ENCODE measurements at regions of chr22 and their contacts with region 1.

Region 1: GRCh38 chr22:18077639-18078328 is at the start of gene PEX26:
- DNase-seq: peak; percentile 89 to 97
- ATAC-seq: peak; percentile 97 to 100 (median 99)
- H3K4me3 ChIP-seq: peak within 1 kb of the TSS; percentile 91
- H3K4me3 Mint-ChIP-seq: peak within 1 kb of the TSS; percentile 97
- H3K27ac ChIP-seq: peak within 1 kb of the TSS; percentile 84
- H3K27ac Mint-ChIP-seq: peak within 1 kb of the TSS; percentile 96
- H3K4me1 ChIP-seq: peaks cover 23% of the 10 kb centered on the region
- H3K4me1 Mint-ChIP-seq: peaks cover 47 to 55% of the 10 kb centered on the region in 2 donors
- H3K27me3 ChIP-seq: no peaks in the 10 kb centered on the region
- H3K27me3 Mint-ChIP-seq: no peaks in the 10 kb centered on the region
- CTCF ChIP-seq: no peak
- total RNA-seq, gene PEX26: 27.6 to 37.4 (median 31.2) TPM

Region 2: GRCh38 chr22:17077255-17077654 is 1000.5 kb before region 1 on chr22:
- intact Hi-C with region 1: loop called (anchors 10 kb)
- DNase-seq: no peak
- ATAC-seq: no peak
- H3K4me3 ChIP-seq: no peak overlapping the region
- H3K4me3 Mint-ChIP-seq: no peak overlapping the region
- H3K27ac ChIP-seq: no peak overlapping the region
- H3K27ac Mint-ChIP-seq: no peak overlapping the region
- H3K4me1 ChIP-seq: peaks cover 9% of the 10 kb centered on the region
- H3K4me1 Mint-ChIP-seq: no peaks in the 10 kb centered on the region
- H3K27me3 ChIP-seq: peaks cover 2% of the 10 kb centered on the region
- H3K27me3 Mint-ChIP-seq: peaks cover 0 to 26% of the 10 kb centered on the region in 2 donors
- CTCF ChIP-seq: no peak

Region 3: GRCh38 chr22:17158568-17159503 is 918.9 kb before region 1 on chr22 and contains the start of gene HDHD5:
- intact Hi-C with region 1: loop called (anchors 10 kb)
- DNase-seq: peak; percentile 84 to 94
- ATAC-seq: peak; percentile 93 to 97 (median 95)
- H3K4me3 ChIP-seq: peak within 1 kb of the TSS; percentile 77
- H3K4me3 Mint-ChIP-seq: peak within 1 kb of the TSS; percentile 93
- H3K27ac ChIP-seq: peak within 1 kb of the TSS; percentile 62
- H3K27ac Mint-ChIP-seq: peak within 1 kb of the TSS; percentile 48 to 74
- H3K4me1 ChIP-seq: peaks cover 24% of the 10 kb centered on the region
- H3K4me1 Mint-ChIP-seq: peaks cover 12 to 16% of the 10 kb centered on the region in 2 donors
- H3K27me3 ChIP-seq: no peaks in the 10 kb centered on the region
- H3K27me3 Mint-ChIP-seq: no peaks in the 10 kb centered on the region
- CTCF ChIP-seq: no peak
- total RNA-seq, gene HDHD5: 12.0 to 16.5 (median 13.5) TPM

Region 4: DNA sequence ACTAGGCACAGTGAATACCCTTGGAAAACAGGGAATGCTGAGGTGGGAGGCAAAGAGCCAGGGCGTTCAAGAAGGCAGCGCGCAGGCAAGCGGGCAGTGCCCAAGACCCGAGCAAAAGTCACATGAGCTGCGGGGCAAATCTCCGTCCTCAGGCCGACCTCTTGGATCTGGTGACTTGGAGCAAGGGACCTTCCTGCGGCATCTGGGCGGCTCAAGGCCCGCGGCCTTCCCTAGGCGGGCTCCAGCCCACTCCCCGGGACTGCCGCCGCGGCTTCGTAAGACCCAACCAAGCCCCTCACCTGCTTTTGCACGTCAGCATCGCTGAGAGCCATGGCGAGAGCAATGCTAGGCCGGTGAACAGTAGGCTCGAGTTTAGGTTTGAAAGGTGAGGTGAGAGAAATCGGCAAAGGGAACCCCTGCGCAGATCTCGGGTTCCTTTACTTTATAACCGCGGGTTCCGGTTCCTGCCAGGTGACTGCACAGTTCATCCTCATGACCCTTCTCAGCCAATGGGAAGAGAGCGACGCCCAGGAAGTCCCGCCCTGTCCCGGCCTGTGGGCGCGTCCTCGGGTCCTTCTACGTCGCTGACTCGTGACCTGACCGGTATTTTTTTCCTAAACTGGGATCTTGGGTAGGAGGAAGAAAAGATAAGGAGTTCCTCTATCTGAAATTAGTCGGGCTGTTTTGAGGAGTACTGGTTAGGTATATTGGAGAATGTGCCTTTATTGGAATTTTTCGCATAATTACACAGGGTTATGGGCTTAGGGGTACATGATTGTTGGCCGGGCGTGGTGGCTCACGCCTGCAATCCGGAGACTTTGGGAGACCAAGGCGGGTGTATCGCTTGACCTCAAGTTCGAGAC is 449.2 kb before region 1 on chr22 and contains the start of gene ATP6V1E1:
- intact Hi-C with region 1: loop called (anchors 2 kb)
- DNase-seq: peak; percentile 97
- ATAC-seq: peak; percentile 99 to 100 (median 100)
- H3K4me3 ChIP-seq: peak within 1 kb of the TSS; percentile 81
- H3K4me3 Mint-ChIP-seq: peak within 1 kb of the TSS; percentile 96
- H3K27ac ChIP-seq: peak within 1 kb of the TSS; percentile 82
- H3K27ac Mint-ChIP-seq: peak within 1 kb of the TSS; percentile 94 to 99
- H3K4me1 ChIP-seq: peaks cover 23% of the 10 kb centered on the region
- H3K4me1 Mint-ChIP-seq: peaks cover 10 to 19% of the 10 kb centered on the region in 2 donors
- H3K27me3 ChIP-seq: no peaks in the 10 kb centered on the region
- H3K27me3 Mint-ChIP-seq: no peaks in the 10 kb centered on the region
- CTCF ChIP-seq: no peak
- total RNA-seq, gene ATP6V1E1: 75.8 to 79.8 (median 76.4) TPM

Region 5: GRCh38 chr22:17742527-17742902 is 335.3 kb before region 1 on chr22:
- intact Hi-C with region 1: loop called (anchors 1 kb)
- DNase-seq: peak; percentile 52 to 85
- ATAC-seq: peak; percentile 79 to 96 (median 88)
- H3K4me3 ChIP-seq: no peak overlapping the region
- H3K4me3 Mint-ChIP-seq: no peak overlapping the region
- H3K27ac ChIP-seq: no peak overlapping the region
- H3K27ac Mint-ChIP-seq: peak overlapping the region; percentile 70 to 76
- H3K4me1 ChIP-seq: no peaks in the 10 kb centered on the region
- H3K4me1 Mint-ChIP-seq: peaks cover 6 to 10% of the 10 kb centered on the region in 2 donors
- H3K27me3 ChIP-seq: no peaks in the 10 kb centered on the region
- H3K27me3 Mint-ChIP-seq: no peaks in the 10 kb centered on the region
- CTCF ChIP-seq: peak; percentile 77

Region 6: DNA sequence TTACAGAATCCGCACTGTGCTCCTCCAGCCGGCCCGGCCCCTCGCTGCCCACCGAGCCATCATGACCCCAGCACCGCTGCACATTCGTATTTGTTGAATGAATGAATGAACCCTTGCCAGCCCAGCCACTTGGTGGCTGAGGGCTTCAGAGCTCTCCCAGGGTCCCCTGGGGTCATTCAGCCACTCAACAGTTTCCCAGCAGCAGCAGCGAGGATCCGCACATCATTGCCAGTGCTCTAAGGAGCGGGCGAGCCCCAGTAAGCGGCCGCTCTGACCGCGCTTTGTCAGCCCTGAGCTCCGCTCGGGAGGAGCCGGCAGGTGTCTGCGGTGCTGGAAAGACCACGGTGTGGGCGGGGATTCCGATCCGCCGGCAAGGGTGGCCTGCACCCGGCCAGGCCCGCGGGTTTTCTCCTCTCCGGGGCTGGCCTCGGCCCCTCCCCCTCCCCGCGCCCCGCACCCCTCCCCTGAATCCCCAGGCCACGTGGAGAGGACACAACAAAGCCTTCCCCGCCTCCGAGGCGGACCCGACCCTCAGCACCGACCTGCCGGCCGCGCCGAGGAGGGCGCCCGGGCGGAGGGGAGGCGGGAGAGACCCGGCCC is 304.1 kb before region 1 on chr22:
- intact Hi-C with region 1: loop called (anchors 2 kb)
- DNase-seq: peak; percentile 79 to 81
- ATAC-seq: peak; percentile 52 to 72 (median 65)
- H3K4me3 ChIP-seq: peak overlapping the region; percentile 64
- H3K4me3 Mint-ChIP-seq: peak overlapping the region; percentile 94
- H3K27ac ChIP-seq: peak overlapping the region; percentile 59
- H3K27ac Mint-ChIP-seq: peak overlapping the region; percentile 82 to 90
- H3K4me1 ChIP-seq: peaks cover 90% of the 10 kb centered on the region
- H3K4me1 Mint-ChIP-seq: peaks cover 58 to 64% of the 10 kb centered on the region in 2 donors
- H3K27me3 ChIP-seq: no peaks in the 10 kb centered on the region
- H3K27me3 Mint-ChIP-seq: no peaks in the 10 kb centered on the region
- CTCF ChIP-seq: no peak

Region 7: GRCh38 chr22:18001040-18001893 is 76.5 kb before region 1 on chr22:
- intact Hi-C with region 1: loop called (anchors 1 kb)
- DNase-seq: peak; percentile 46 to 79
- ATAC-seq: peak; percentile 59 to 76 (median 72)
- H3K4me3 ChIP-seq: peak overlapping the region; percentile 77
- H3K4me3 Mint-ChIP-seq: peak overlapping the region; percentile 95
- H3K27ac ChIP-seq: peak overlapping the region; percentile 89
- H3K27ac Mint-ChIP-seq: peak overlapping the region; percentile 81 to 84
- H3K4me1 ChIP-seq: peaks cover 51% of the 10 kb centered on the region
- H3K4me1 Mint-ChIP-seq: peaks cover 29 to 38% of the 10 kb centered on the region in 2 donors
- H3K27me3 ChIP-seq: no peaks in the 10 kb centered on the region
- H3K27me3 Mint-ChIP-seq: peaks cover 5 to 16% of the 10 kb centered on the region in 2 donors
- CTCF ChIP-seq: peak; percentile 40

Measured in natural killer cell (primary cell).